ENCODE measurements at regions of chr14 and their contacts with region 1.

Region 1: GRCh38 chr14:60184146-60184904 is 19.1 kb upstream of the DHRS7 start:
- DNase-seq: peak in 17 of 35 experiments; percentile 3 to 88 (median 24)
- ATAC-seq: peak; percentile 23 to 82 (median 66)
- H3K4me3 ChIP-seq: peak overlapping the region in 1 of 2 donors; percentile 26
- H3K4me3 Mint-ChIP-seq: peak overlapping the region; percentile 75 to 76 (median 75)
- H3K27ac ChIP-seq: peak overlapping the region; percentile 81
- H3K27ac Mint-ChIP-seq: peak overlapping the region; percentile 82 to 91
- H3K4me1 ChIP-seq: peaks cover 4 to 5% of the 10 kb centered on the region in 2 experiments
- H3K4me1 Mint-ChIP-seq: peaks cover 7 to 13% (median 9%) of the 10 kb centered on the region in 3 donors
- H3K27me3 ChIP-seq: no peaks in the 10 kb centered on the region
- H3K27me3 Mint-ChIP-seq: no peaks in the 10 kb centered on the region

Region 2: GRCh38 chr14:59638885-59639284 is 545.4 kb before region 1 on chr14:
- CTCF ChIA-PET with region 1: no interaction called
- POLR2A ChIA-PET with region 1: no interaction called
- DNase-seq: no peak
- ATAC-seq: no peak
- H3K4me3 ChIP-seq: no peak overlapping the region
- H3K4me3 Mint-ChIP-seq: no peak overlapping the region
- H3K27ac ChIP-seq: no peak overlapping the region
- H3K27ac Mint-ChIP-seq: no peak overlapping the region
- H3K4me1 ChIP-seq: no peaks in the 10 kb centered on the region
- H3K4me1 Mint-ChIP-seq: no peaks in the 10 kb centered on the region
- H3K27me3 ChIP-seq: peaks cover 0 to 3% of the 10 kb centered on the region in 2 experiments
- H3K27me3 Mint-ChIP-seq: peaks cover 3 to 10% of the 10 kb centered on the region in 2 donors

Region 3: DNA sequence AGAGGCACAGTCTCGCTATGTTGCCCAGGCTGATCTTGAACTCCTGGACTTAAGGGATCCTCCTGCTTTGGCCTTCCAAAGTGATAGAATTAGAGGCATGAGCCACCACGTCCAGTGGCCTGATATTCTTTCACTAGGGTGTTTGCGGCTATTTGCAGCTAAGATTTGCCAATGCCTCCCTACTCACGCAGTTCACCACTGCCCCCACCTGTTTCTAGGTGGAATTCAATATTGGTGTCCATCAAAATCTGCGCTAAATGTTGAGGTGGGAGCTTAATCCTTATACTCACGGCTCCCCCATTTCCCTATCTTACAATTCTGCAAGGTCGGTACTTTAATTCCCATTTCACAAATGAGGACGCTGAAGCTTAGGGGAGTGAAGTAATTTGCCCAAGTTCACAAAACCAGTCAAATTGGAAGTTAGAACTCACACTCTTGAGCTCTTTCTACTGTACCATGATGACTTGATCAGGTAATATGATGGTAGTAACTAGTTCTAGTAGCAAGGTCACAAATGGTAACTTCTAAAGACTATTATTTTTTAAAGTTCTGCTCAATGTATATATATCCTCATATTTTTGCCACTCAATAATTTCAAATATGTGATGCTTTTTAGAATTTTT is 286.5 kb before region 1 on chr14:
- CTCF ChIA-PET with region 1: no interaction called
- POLR2A ChIA-PET with region 1: no interaction called
- DNase-seq: no peak
- ATAC-seq: no peak
- H3K4me3 ChIP-seq: no peak overlapping the region
- H3K4me3 Mint-ChIP-seq: no peak overlapping the region
- H3K27ac ChIP-seq: no peak overlapping the region
- H3K27ac Mint-ChIP-seq: no peak overlapping the region
- H3K4me1 ChIP-seq: no peaks in the 10 kb centered on the region
- H3K4me1 Mint-ChIP-seq: no peaks in the 10 kb centered on the region
- H3K27me3 ChIP-seq: no peaks in the 10 kb centered on the region
- H3K27me3 Mint-ChIP-seq: peaks cover 21 to 33% of the 10 kb centered on the region in 2 donors

Region 4: DNA sequence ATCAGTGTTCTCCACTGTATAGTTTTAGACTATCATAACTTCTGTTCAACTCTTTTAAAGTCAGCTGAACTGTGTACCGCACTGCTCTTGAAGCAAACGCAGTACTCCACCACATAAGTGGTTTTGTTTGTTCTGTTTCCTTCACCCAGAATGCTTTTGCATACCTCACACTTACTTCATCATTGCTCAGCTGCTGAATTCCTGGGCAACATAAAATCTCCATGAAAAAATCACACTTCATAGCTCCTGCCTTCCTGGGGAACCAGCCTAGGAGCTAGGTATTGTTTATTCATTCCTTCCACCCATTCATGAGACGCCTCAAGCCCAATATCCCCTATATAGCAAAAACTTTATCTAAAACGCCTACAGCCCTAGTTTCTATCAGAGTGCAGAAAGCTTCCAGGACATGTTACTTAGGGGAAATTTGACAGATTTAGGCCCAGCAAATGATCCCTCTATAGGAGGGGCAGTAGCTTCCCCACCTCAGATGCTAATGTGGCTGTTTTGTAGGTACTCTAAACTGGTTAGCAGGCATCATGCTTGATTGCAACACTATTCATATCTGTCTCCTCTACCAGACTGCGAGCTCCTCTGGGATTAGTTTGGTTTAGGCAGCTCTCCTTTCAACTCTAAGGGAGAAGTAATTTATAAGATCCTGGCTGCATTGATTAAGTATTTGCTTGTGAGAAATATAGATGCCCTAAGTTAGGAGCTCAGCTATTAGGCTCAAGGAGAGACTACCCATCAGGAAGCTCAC is 219.9 kb before region 1 on chr14:
- CTCF ChIA-PET with region 1: interaction called, 84 to 133 read pairs
- POLR2A ChIA-PET with region 1: interaction called, 3 read pairs
- DNase-seq: peak in 2 of 35 experiments; percentile 1 to 23
- ATAC-seq: peak; percentile 4 to 55 (median 20)
- H3K4me3 ChIP-seq: no peak overlapping the region
- H3K4me3 Mint-ChIP-seq: peak overlapping the region; percentile 83 to 93 (median 85)
- H3K27ac ChIP-seq: peak overlapping the region; percentile 75
- H3K27ac Mint-ChIP-seq: peak overlapping the region; percentile 79 to 90
- H3K4me1 ChIP-seq: peaks cover 8 to 10% of the 10 kb centered on the region in 2 experiments
- H3K4me1 Mint-ChIP-seq: peaks cover 10 to 20% (median 15%) of the 10 kb centered on the region in 3 donors
- H3K27me3 ChIP-seq: peaks cover 0 to 3% of the 10 kb centered on the region in 2 experiments
- H3K27me3 Mint-ChIP-seq: peaks cover 4 to 8% of the 10 kb centered on the region in 2 donors

Region 5: DNA sequence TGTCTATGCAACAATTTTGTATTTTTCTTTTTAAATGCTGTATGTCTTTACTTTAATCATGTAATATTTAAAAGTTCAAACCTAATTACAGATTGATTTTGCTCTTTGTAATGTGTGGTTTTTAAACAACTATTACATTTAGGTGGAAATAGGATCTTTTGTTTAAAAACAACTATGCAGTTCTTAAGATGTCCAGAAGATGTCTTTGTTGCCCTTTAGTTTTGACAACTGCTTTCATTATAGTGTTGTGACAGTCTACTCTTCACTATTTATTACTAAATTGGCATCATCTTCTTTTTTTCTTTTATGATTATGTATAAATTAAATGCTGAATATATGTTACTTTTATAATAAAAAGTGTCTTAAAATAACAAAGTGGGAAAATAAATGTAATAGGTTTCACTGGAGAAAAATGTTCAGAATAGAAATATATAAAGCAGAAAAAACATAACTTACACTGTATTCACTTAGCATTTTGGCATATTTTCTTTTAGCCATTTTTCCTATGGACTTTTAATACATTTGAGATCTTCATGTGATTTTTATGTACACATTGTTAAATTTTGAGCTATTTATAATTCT is 119.7 kb before region 1 on chr14:
- CTCF ChIA-PET with region 1: interaction called, 37 to 60 read pairs
- POLR2A ChIA-PET with region 1: interaction called in 1 of 2 experiments, 3 read pairs
- DNase-seq: peak in 1 of 35 experiments; percentile 64
- ATAC-seq: peak in 2 of 4 experiments; percentile 50 to 53
- H3K4me3 ChIP-seq: no peak overlapping the region
- H3K4me3 Mint-ChIP-seq: no peak overlapping the region
- H3K27ac ChIP-seq: no peak overlapping the region
- H3K27ac Mint-ChIP-seq: no peak overlapping the region
- H3K4me1 ChIP-seq: no peaks in the 10 kb centered on the region
- H3K4me1 Mint-ChIP-seq: no peaks in the 10 kb centered on the region
- H3K27me3 ChIP-seq: no peaks in the 10 kb centered on the region
- H3K27me3 Mint-ChIP-seq: peaks cover 3 to 5% of the 10 kb centered on the region in 2 donors

Region 6: DNA sequence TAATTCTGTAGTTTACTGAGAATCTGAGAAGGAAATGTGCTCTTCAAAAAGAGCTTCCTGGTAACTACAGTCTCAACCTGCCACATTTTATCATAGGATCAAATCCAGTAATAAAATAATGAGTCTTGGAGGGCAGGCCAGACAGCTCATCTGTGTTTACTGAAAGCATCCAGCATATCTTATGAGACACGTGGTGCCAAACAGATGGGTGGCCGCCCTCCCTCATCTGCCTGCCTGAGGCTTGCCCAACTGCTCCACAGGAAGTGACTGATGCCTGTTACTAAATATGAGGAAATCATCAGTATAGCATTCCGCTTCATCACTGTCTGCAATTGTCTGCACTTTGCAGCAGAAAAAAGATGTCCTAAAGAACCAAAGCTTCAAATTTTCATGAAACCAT is 32.6 kb before region 1 on chr14:
- CTCF ChIA-PET with region 1: interaction called, 6 to 15 read pairs
- POLR2A ChIA-PET with region 1: interaction called in 1 of 2 experiments, 4 read pairs
- DNase-seq: peak; percentile 24 to 80 (median 65)
- ATAC-seq: peak; percentile 98 to 100 (median 100)
- H3K4me3 ChIP-seq: no peak overlapping the region
- H3K4me3 Mint-ChIP-seq: peak overlapping the region in 2 of 3 donors; percentile 3 to 29
- H3K27ac ChIP-seq: peak overlapping the region; percentile 52
- H3K27ac Mint-ChIP-seq: peak overlapping the region; percentile 91 to 94
- H3K4me1 ChIP-seq: peaks cover 19 to 20% of the 10 kb centered on the region in 2 experiments
- H3K4me1 Mint-ChIP-seq: peaks cover 42 to 54% (median 53%) of the 10 kb centered on the region in 3 donors
- H3K27me3 ChIP-seq: no peaks in the 10 kb centered on the region
- H3K27me3 Mint-ChIP-seq: no peaks in the 10 kb centered on the region

Region 7: GRCh38 chr14:60164712-60165546 is 19.4 kb before region 1 on chr14 and contains the start of gene DHRS7:
- CTCF ChIA-PET with region 1: interaction called, 8 to 25 read pairs
- POLR2A ChIA-PET with region 1: interaction called in 1 of 2 experiments, 4 read pairs
- DNase-seq: peak; percentile 26 to 83 (median 49)
- ATAC-seq: peak; percentile 78 to 84 (median 80)
- H3K4me3 ChIP-seq: peak within 1 kb of the TSS; percentile 89 to 92
- H3K4me3 Mint-ChIP-seq: peak within 1 kb of the TSS; percentile 94 to 100 (median 99)
- H3K27ac ChIP-seq: peak within 1 kb of the TSS; percentile 97
- H3K27ac Mint-ChIP-seq: peak within 1 kb of the TSS; percentile 99 to 100
- H3K4me1 ChIP-seq: peaks cover 3 to 32% of the 10 kb centered on the region in 2 experiments
- H3K4me1 Mint-ChIP-seq: peaks cover 41 to 53% (median 50%) of the 10 kb centered on the region in 3 donors
- H3K27me3 ChIP-seq: no peaks in the 10 kb centered on the region
- H3K27me3 Mint-ChIP-seq: no peaks in the 10 kb centered on the region
- total RNA-seq, gene DHRS7: 37.1 to 66.9 (median 54.0) TPM

Region 8: GRCh38 chr14:60248697-60249318 is 64.5 kb after region 1 on chr14 and contains the start of gene PPM1A:
- CTCF ChIA-PET with region 1: interaction called in 1 of 2 experiments, 24 read pairs
- POLR2A ChIA-PET with region 1: no interaction called
- DNase-seq: peak; percentile 88 to 99 (median 96)
- ATAC-seq: peak; percentile 79 to 83 (median 79)
- H3K4me3 ChIP-seq: peak within 1 kb of the TSS; percentile 83 to 91
- H3K4me3 Mint-ChIP-seq: peak within 1 kb of the TSS; percentile 88 to 96 (median 94)
- H3K27ac ChIP-seq: peak within 1 kb of the TSS; percentile 98
- H3K27ac Mint-ChIP-seq: peak within 1 kb of the TSS; percentile 99
- H3K4me1 ChIP-seq: peaks cover 21 to 32% of the 10 kb centered on the region in 2 experiments
- H3K4me1 Mint-ChIP-seq: peaks cover 49 to 67% (median 53%) of the 10 kb centered on the region in 3 donors
- H3K27me3 ChIP-seq: no peaks in the 10 kb centered on the region
- H3K27me3 Mint-ChIP-seq: no peaks in the 10 kb centered on the region
- total RNA-seq, gene PPM1A: 42.8 to 71.6 (median 46.1) TPM

Region 9: DNA sequence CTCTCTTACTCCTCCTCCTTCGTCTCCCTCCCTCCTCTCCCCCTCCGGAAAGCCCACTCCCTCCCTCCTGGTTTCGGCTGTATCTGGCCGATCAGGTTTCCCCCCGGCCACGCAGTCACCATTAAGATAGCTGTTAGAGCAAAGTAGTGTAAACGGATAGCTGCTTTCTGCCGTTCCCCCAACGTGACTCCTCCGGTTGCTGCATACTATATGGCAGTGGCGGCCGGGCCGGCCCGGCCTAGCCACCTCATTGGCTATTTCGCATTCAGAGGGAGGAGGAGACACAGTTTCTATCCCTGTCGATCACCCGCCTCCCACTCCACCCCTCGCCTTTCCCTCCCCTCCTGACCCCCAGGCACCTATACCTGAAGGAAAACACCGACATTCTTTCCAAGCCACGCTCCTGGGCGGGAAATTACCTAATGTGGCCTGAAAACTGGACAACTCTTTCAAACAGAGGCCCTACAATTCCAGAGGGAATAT is 539.9 kb after region 1 on chr14 and contains the start of gene SIX4:
- CTCF ChIA-PET with region 1: no interaction called
- POLR2A ChIA-PET with region 1: no interaction called
- DNase-seq: peak in 2 of 35 experiments; percentile 12 to 22
- ATAC-seq: no peak
- H3K4me3 ChIP-seq: peak within 1 kb of the TSS; percentile 49 to 77
- H3K4me3 Mint-ChIP-seq: peak within 1 kb of the TSS; percentile 83 to 91 (median 83)
- H3K27ac ChIP-seq: no peak within 1 kb of the TSS
- H3K27ac Mint-ChIP-seq: no peak within 1 kb of the TSS
- H3K4me1 ChIP-seq: peaks cover 0 to 34% of the 10 kb centered on the region in 2 experiments
- H3K4me1 Mint-ChIP-seq: peaks cover 16 to 26% (median 25%) of the 10 kb centered on the region in 3 donors
- H3K27me3 ChIP-seq: peaks cover 32 to 62% of the 10 kb centered on the region in 2 experiments
- H3K27me3 Mint-ChIP-seq: peaks cover 66 to 80% of the 10 kb centered on the region in 2 donors
- total RNA-seq, gene SIX4: 0.12 to 0.22 (median 0.13) TPM in 3 of 5 donors, not detected in the others

Measured in T-cell (primary cell).